MCF 10A (cell line): ENCODE measurements at regions of chr9 and their contacts with region 1.

Region 1: GRCh38 chr9:34899535-34900158 is 58.4 kb upstream of the PHF24 start:
- DNase-seq: peak; percentile 85
- H3K4me3 Mint-ChIP-seq: no peak overlapping the region
- H3K27ac Mint-ChIP-seq: no peak overlapping the region
- H3K4me1 Mint-ChIP-seq: no peaks in the 10 kb centered on the region
- H3K27me3 Mint-ChIP-seq: peaks cover 82% of the 10 kb centered on the region
- CTCF ChIP-seq: peak; percentile 83

Region 2: DNA sequence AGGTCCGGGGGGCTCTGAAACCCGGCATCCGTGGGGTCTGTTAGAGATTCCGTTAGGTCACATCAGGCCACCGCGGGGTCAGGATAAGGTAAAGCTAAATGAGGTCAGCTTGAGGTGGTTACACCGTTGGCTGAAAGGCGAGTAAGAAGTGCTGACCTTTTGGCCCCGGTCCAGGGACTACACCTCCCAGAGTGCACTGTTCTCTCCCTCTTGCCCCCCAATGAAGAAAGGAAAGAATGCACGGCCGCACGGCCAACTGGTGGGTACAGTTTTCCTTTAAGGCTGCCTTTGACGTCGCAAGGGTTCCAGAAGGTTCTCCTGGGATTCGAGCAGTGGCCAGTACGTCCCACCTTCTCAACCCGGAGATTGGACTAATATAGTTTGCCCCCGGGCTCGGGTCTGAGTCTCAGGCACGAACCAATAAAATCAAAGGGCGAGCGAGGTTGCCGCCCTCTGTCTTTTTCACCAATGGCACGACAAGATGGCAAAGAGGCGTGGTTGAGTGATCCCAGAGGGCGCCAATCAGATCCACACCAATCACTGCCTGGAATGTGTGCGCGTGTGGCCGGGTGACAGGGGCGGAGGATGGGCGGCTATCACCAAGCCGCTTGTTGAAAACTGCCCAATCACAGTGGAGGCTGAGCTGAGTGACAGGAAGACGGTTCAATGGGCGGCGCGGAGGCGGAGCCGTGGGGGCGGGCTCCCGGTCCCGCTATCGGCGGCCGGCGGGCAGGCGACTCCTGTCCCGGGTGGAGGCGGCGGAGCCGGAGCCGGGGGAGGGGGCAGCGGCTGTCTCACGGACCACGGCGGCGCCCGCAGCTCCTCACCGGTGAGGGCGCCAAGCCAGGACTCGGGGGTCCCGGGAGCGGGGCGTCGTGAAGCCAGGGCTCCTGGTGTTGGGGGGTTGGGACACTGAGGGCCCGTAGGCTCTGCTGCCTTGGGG is 89.6 kb after region 1 on chr9 and contains the start of gene DNAJB5:
- CTCF ChIA-PET with region 1: interaction called, 76 read pairs
- POLR2A ChIA-PET with region 1: interaction called, 7 read pairs
- intact Hi-C with region 1: loop called (anchors 1 kb)
- DNase-seq: peak; percentile 99
- H3K4me3 Mint-ChIP-seq: peak within 1 kb of the TSS; percentile 78
- H3K27ac Mint-ChIP-seq: peak within 1 kb of the TSS; percentile 46
- H3K4me1 Mint-ChIP-seq: peaks cover 32% of the 10 kb centered on the region
- H3K27me3 Mint-ChIP-seq: no peaks in the 10 kb centered on the region
- CTCF ChIP-seq: no peak
- total RNA-seq, gene DNAJB5: 2.2 and 2.9 TPM in 2 replicates

Region 3: GRCh38 chr9:35042081-35042604 is 142.5 kb after region 1 on chr9:
- CTCF ChIA-PET with region 1: interaction called, 12 read pairs
- POLR2A ChIA-PET with region 1: no interaction called
- intact Hi-C with region 1: no loop called
- DNase-seq: peak; percentile 51
- H3K4me3 Mint-ChIP-seq: no peak overlapping the region
- H3K27ac Mint-ChIP-seq: no peak overlapping the region
- H3K4me1 Mint-ChIP-seq: peaks cover 16% of the 10 kb centered on the region
- H3K27me3 Mint-ChIP-seq: no peaks in the 10 kb centered on the region
- CTCF ChIP-seq: no peak

Region 4: GRCh38 chr9:35096035-35096849 is 196.6 kb after region 1 on chr9 and contains the start of gene PIGO:
- CTCF ChIA-PET with region 1: interaction called, 29 read pairs
- POLR2A ChIA-PET with region 1: interaction called, 9 read pairs
- intact Hi-C with region 1: loop called (anchors 1 kb)
- DNase-seq: peak; percentile 85
- H3K4me3 Mint-ChIP-seq: peak within 1 kb of the TSS; percentile 85
- H3K27ac Mint-ChIP-seq: peak within 1 kb of the TSS; percentile 95
- H3K4me1 Mint-ChIP-seq: peaks cover 15% of the 10 kb centered on the region
- H3K27me3 Mint-ChIP-seq: no peaks in the 10 kb centered on the region
- CTCF ChIP-seq: peak; percentile 49
- total RNA-seq, gene PIGO: 34.8 and 39.2 TPM in 2 replicates

Region 5: DNA sequence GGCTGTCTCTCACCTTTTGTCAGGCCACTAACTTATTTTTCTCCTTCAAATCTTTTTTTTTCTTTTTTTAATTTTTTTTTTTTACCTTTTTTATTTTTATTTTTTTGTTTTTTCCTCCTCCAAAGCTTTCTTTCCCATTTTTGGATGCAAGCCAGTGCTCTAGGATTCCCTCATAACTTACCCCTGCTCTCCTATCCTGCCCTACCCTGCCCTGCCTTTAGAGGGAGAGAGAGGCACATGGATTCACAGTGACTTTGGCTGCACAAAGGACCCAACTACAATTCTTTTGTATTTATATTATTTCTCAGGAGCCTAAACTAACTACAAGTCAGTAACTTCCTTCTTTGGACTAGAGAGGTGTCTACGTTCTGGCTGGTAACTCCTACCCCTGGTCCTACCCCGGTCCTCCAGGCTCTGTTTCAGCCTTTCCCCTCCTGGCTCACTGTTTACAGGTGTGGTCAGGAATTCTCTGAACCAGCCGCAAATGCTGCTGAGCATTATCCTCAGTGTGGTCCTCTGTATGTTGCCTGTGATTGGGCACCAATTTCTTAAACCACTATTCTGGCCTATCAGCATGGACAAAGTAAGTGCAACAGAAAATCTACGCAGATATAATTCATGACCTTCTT is 581.8 kb after region 1 on chr9:
- CTCF ChIA-PET with region 1: interaction called, 7 read pairs
- POLR2A ChIA-PET with region 1: no interaction called
- intact Hi-C with region 1: loop called (anchors 1 kb)
- DNase-seq: peak; percentile 85
- H3K4me3 Mint-ChIP-seq: no peak overlapping the region
- H3K27ac Mint-ChIP-seq: no peak overlapping the region
- H3K4me1 Mint-ChIP-seq: peaks cover 10% of the 10 kb centered on the region
- H3K27me3 Mint-ChIP-seq: no peaks in the 10 kb centered on the region
- CTCF ChIP-seq: peak; percentile 84

Region 6: DNA sequence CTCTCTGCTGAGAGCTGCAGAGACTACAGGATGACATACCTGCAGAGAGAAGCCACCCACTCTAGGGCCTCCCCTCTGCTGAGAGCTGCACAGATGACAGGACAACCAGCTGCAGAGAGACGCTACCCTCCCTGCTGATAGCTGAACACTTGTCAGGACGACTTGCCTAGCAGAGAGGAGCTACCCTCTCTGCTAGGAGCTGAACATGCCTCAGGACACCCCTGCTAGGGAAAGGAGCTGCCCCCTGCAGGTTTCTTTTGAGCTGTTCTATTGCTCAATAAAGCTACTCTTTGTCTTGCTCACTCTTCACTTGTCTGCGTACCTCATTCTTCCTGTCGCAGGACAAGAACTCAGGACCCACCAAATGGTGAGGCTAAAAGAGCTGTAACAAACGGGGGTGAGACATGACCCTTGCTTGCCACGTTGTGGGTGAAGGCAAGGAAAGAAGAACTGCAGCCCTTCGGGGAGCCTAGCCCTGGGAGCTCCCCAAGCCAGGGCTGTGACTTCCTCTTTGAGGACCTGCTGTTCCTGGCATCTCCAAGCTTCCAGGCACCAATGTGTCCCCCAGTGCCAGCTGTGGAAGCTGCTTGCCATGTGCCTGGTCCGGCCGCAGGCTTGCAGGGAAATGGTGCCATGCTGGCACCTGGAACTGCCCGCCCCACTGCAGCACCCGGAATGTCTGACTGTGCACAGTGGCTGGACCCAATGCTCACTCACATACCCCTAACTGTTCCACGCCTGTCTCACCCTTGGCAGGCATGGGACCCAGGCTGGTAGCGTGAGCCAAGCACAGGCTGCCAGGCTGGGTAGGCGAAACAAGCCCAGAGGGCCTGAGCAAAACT is 700.3 kb after region 1 on chr9:
- CTCF ChIA-PET with region 1: no interaction called
- POLR2A ChIA-PET with region 1: no interaction called
- intact Hi-C with region 1: no loop called
- DNase-seq: peak; percentile 9
- H3K4me3 Mint-ChIP-seq: no peak overlapping the region
- H3K27ac Mint-ChIP-seq: no peak overlapping the region
- H3K4me1 Mint-ChIP-seq: peaks cover 22% of the 10 kb centered on the region
- H3K27me3 Mint-ChIP-seq: no peaks in the 10 kb centered on the region
- CTCF ChIP-seq: no peak